Sciatic nerve (tissue), 2 donors: ENCODE measurements at regions of chr1 and their contacts with region 1.

Region 1: GRCh38 chr1:244801246-244801645 is 34.2 kb upstream of the COX20 start:
- DNase-seq: no peak
- ATAC-seq: no peak

Region 2: GRCh38 chr1:244590670-244591069 is 210.6 kb before region 1 on chr1:
- intact Hi-C with region 1: loop called (anchors 5 kb)
- DNase-seq: no peak
- ATAC-seq: no peak

Region 3: DNA sequence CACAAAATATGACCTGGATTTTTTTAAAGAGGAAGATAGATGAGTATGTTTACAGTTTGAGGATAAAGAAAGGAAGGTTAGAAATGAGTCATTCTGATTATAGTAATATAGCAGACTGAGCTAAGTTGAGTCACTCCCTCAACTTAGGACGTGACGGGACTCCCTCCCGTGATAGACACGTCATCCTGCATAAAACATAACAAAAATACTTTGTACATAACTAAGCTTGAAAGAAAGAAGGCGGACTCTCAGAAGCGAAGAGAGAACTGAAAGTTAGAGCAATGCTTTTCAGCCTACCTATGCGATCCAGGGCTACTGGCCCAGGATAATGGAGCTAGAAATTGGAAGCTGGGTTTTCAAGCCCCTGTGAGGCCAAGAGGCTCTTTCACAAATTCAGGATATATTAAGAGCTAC is 201.3 kb before region 1 on chr1:
- intact Hi-C with region 1: loop called (anchors 5 kb)
- DNase-seq: no peak
- ATAC-seq: no peak

Region 4: DNA sequence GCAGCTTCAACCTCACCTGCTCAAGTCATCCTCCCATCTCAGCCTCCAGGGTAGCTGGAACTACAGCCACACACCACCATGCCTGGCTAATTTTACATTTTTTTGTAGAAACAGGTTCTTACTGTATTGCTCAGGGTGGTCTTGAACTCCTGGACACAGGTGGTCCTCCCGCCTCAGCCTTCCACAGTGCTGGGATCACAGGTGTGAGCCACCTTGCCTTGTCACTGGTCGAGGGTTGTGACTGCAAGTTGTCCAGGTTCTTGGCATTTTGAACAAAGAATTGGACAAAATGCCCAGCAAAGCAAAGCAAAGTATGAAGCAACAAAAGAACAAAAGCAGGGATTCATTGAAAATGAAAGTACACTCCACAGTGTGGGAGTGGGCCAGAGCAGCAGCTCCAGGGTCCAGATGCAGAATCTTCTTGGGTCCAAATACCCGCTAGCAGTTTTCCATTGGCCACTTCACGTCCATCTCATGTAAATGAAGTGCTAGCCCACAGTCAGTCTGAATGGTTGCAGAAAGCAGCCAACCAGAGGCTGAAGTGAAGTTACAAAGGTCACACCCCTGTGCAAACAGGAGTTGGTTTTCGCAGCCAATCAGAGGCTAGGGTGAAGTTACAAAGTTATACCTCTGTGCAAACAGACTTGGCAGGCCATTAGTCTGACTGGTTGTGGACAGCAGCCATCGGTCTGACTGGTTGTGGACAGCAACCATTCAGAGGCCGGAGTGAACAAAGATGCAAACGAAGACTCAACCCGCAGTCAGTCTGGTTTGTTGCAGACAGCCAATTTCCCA is 244.0 kb after region 1 on chr1:
- intact Hi-C with region 1: loop called (anchors 10 kb)
- DNase-seq: no peak
- ATAC-seq: peak; percentile 42